ENCODE measurements at regions of chr11 and their contacts with region 1.

Region 1: GRCh38 chr11:62309991-62310390 is 11.1 kb upstream of the SCGB1D4 start:
- DNase-seq: no peak
- H3K4me3 Mint-ChIP-seq: no peak overlapping the region
- H3K27ac Mint-ChIP-seq: no peak overlapping the region
- H3K4me1 Mint-ChIP-seq: peaks cover 9% of the 10 kb centered on the region
- H3K27me3 Mint-ChIP-seq: peaks cover 40% of the 10 kb centered on the region

Region 2: GRCh38 chr11:62322524-62322923 is 12.5 kb after region 1 on chr11:
- CTCF ChIA-PET with region 1: interaction called, 20 read pairs
- POLR2A ChIA-PET with region 1: no interaction called
- DNase-seq: no peak
- H3K4me3 Mint-ChIP-seq: no peak overlapping the region
- H3K27ac Mint-ChIP-seq: no peak overlapping the region
- H3K4me1 Mint-ChIP-seq: peaks cover 7% of the 10 kb centered on the region
- H3K27me3 Mint-ChIP-seq: peaks cover 12% of the 10 kb centered on the region